ENCODE measurements at regions of chr5 and their contacts with region 1.

Region 1: GRCh38 chr5:135034236-135034962 is 371 bp upstream of the PITX1 start:
- DNase-seq: peak; percentile 70
- ATAC-seq: peak; percentile 31
- H3K4me3 Mint-ChIP-seq: peak overlapping the region; percentile 63
- H3K27ac Mint-ChIP-seq: no peak overlapping the region
- H3K4me1 Mint-ChIP-seq: peaks cover 30% of the 10 kb centered on the region
- H3K27me3 Mint-ChIP-seq: peaks cover 78% of the 10 kb centered on the region

Region 2: GRCh38 chr5:134934202-134934601 is 100.2 kb before region 1 on chr5:
- CTCF ChIA-PET with region 1: no interaction called
- POLR2A ChIA-PET with region 1: no interaction called
- intact Hi-C with region 1: no loop called
- DNase-seq: no peak
- ATAC-seq: no peak
- H3K4me3 Mint-ChIP-seq: no peak overlapping the region
- H3K27ac Mint-ChIP-seq: no peak overlapping the region
- H3K4me1 Mint-ChIP-seq: no peaks in the 10 kb centered on the region
- H3K27me3 Mint-ChIP-seq: no peaks in the 10 kb centered on the region

Region 3: GRCh38 chr5:134944630-134945029 is 89.8 kb before region 1 on chr5:
- CTCF ChIA-PET with region 1: no interaction called
- POLR2A ChIA-PET with region 1: no interaction called
- intact Hi-C with region 1: no loop called
- DNase-seq: no peak
- ATAC-seq: no peak
- H3K4me3 Mint-ChIP-seq: no peak overlapping the region
- H3K27ac Mint-ChIP-seq: no peak overlapping the region
- H3K4me1 Mint-ChIP-seq: no peaks in the 10 kb centered on the region
- H3K27me3 Mint-ChIP-seq: no peaks in the 10 kb centered on the region

Region 4: DNA sequence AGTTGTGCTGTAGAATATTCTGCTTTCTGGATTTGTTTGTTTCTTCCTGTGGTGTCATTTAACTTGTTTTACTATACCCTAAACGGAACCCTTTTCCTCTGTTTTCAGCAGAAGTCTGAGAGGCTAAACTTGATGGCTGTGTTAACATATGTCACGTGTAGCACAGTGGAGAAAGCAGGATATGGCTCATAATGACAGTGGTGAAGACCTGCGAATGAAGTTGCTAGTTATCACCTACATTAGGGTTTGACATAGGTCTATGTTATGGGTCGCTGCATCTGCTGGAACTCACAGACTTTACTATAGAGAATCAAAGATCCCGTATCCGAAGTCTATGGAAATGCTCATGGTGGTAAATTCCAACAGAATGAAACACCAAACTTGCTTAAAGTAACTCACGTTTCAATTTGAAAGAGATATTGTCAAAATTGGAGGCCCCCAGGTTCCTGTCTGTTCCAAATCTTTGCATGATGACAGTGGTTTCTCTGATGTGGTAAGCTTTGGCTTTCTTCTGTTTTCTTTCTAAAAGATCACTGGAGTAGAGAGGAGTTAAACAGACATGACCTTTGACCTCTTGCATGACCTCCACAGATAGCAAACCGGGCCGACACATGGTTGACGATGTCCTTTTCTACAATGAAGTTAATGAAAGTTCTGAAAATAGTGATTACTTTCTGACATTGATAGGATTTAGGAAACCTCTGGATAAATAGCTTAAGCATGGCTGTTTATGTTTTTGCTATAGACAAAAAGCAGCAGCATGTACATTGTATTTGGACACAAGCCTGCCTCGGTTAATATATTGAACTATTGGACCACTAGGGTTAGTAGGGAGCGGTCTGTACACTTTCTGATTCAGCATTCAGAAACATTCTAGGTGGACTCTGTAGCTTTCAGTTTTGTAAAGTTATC is 69.8 kb before region 1 on chr5:
- CTCF ChIA-PET with region 1: no interaction called
- POLR2A ChIA-PET with region 1: no interaction called
- intact Hi-C with region 1: loop called in 1 of 2 experiments (anchors 2 kb)
- DNase-seq: peak; percentile 28
- ATAC-seq: peak; percentile 93
- H3K4me3 Mint-ChIP-seq: peak overlapping the region; percentile 10
- H3K27ac Mint-ChIP-seq: peak overlapping the region; percentile 84
- H3K4me1 Mint-ChIP-seq: peaks cover 28% of the 10 kb centered on the region
- H3K27me3 Mint-ChIP-seq: no peaks in the 10 kb centered on the region

Region 5: GRCh38 chr5:135191084-135191826 is 156.9 kb after region 1 on chr5:
- CTCF ChIA-PET with region 1: interaction called, 4 read pairs
- POLR2A ChIA-PET with region 1: no interaction called
- intact Hi-C with region 1: loop called in 1 of 2 experiments (anchors 5 kb)
- DNase-seq: peak; percentile 89
- ATAC-seq: peak; percentile 98
- H3K4me3 Mint-ChIP-seq: peak overlapping the region; percentile 53
- H3K27ac Mint-ChIP-seq: no peak overlapping the region
- H3K4me1 Mint-ChIP-seq: peaks cover 2% of the 10 kb centered on the region
- H3K27me3 Mint-ChIP-seq: peaks cover 13% of the 10 kb centered on the region

Measured in activated CD4-positive, alpha-beta T cell treated with anti-CD3 and anti-CD28 coated beads for 36 hours (primary cell).